Naive thymus-derived CD8-positive, alpha-beta T cell (primary cell): ENCODE measurements at regions of chr19 and their contacts with region 1.

Region 1: DNA sequence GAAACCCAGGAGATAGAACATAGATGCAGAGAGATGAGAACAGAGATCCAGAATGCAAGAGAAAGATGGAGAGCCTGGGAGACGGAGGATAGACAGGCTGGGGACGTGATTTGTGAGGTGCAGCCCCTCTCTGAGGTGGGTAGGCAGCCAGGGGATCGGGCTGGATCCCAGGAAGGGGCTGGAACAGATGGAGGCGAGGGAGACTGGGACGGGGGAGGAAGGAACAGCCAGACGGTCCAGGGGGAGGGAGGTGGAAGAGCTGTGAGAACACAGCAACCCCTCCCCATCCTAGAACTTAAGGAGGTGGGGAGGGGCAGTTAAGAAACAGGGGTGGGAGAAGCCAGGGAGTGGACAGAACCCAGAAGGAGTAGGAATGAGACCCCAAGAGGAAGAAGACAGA is 3.1 kb downstream of the SLC17A7 start:
- DNase-seq: no peak
- ATAC-seq: no peak
- H3K4me3 Mint-ChIP-seq: no peak overlapping the region
- H3K27ac Mint-ChIP-seq: no peak overlapping the region
- H3K4me1 Mint-ChIP-seq: peaks cover 34 to 52% (median 42%) of the 10 kb centered on the region in 4 donors
- H3K27me3 Mint-ChIP-seq: peaks cover 61 to 92% (median 83%) of the 10 kb centered on the region in 5 donors

Region 2: GRCh38 chr19:49425922-49426592 is 12.2 kb before region 1 on chr19:
- POLR2A ChIA-PET with region 1: interaction called, 11 read pairs
- DNase-seq: no peak
- ATAC-seq: no peak
- H3K4me3 Mint-ChIP-seq: peak overlapping the region in 7 of 10 donors; percentile 14 to 65 (median 61)
- H3K27ac Mint-ChIP-seq: peak overlapping the region in 3 of 10 donors; percentile 2 to 67 (median 41)
- H3K4me1 Mint-ChIP-seq: peaks cover 54 to 69% (median 64%) of the 10 kb centered on the region in 4 donors
- H3K27me3 Mint-ChIP-seq: peaks cover 58 to 100% (median 77%) of the 10 kb centered on the region in 5 donors